ENCODE measurements at regions of chrX and their contacts with region 1.

Region 1: GRCh38 chrX:110317820-110318658 is at the start of gene AMMECR1:
- DNase-seq: peak; percentile 84

Region 2: DNA sequence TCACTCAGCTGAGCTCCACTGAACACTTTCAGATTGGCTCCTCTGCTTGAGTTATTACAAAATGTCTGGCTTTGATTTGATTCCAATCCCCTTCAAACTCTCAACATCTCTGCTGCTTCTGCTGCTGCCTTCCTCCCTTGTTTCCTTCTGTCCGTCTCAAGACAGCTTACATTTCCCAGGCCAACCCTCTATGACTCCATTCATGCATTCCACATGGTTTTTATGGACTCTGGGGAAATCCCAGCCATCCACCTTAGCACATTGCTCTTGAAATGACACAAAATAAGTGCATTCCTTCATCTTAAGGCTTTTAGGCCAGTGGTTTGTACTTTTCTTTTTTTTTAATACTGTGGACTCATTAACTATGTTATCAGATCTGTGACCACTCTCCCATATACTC is 383.6 kb before region 1 on chrX:
- CTCF ChIA-PET with region 1: no interaction called
- POLR2A ChIA-PET with region 1: no interaction called
- DNase-seq: no peak

Region 3: GRCh38 chrX:110304884-110305283 is 13.2 kb before region 1 on chrX:
- CTCF ChIA-PET with region 1: interaction called, 3 read pairs
- POLR2A ChIA-PET with region 1: interaction called, 13 read pairs
- DNase-seq: no peak